Activated B cell treated with CpG ODN at 0.5 μM for 24 hours (primary cell): ENCODE measurements at regions of chr19 and their contacts with region 1.

Region 1: DNA sequence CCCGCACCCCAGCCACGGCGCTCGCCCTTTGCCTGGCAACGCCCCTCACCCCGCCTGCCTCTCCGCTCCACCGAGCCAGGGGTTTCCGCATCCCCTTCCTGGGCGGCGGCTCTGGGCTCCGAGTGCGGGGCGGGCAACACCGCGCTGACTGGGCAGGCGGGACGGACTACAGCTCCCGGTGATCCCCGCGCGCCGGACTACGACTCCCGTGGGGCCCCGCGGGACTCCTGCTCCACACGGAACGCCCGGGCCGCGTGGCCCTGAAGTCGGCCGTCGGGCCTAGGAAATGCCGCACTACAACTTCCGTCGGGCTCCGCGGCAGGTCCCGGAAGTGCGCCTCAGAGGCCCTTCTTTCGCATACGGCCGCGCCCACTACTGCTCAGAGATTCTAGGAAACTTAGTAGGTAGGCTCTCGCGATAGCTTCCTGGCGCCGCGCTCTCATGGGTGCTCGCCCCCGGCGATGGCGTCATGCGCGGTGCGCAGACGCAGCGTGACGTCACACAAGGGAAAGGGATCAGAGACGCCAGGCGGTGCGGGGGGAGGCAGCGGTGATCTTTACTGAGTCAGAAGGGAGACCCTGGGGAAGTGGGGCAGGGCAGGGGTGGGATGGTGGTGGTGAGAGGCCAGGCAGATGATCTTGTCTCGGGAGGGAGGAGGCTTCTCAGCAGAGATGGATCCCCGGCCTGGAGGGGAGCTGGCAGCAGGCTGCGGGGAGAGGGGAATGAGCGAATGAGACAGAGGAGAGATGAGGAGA is at the start of gene JOSD2:
- DNase-seq: peak; percentile 96
- ATAC-seq: peak; percentile 94
- H3K4me3 Mint-ChIP-seq: peak within 1 kb of the TSS; percentile 89
- H3K27ac Mint-ChIP-seq: peak within 1 kb of the TSS; percentile 93
- H3K4me1 Mint-ChIP-seq: peaks cover 13% of the 10 kb centered on the region
- H3K27me3 Mint-ChIP-seq: peaks cover 5% of the 10 kb centered on the region
- CTCF ChIP-seq: no peak
- total RNA-seq, gene JOSD2: 21.0 and 23.7 TPM in 2 replicates

Region 2: DNA sequence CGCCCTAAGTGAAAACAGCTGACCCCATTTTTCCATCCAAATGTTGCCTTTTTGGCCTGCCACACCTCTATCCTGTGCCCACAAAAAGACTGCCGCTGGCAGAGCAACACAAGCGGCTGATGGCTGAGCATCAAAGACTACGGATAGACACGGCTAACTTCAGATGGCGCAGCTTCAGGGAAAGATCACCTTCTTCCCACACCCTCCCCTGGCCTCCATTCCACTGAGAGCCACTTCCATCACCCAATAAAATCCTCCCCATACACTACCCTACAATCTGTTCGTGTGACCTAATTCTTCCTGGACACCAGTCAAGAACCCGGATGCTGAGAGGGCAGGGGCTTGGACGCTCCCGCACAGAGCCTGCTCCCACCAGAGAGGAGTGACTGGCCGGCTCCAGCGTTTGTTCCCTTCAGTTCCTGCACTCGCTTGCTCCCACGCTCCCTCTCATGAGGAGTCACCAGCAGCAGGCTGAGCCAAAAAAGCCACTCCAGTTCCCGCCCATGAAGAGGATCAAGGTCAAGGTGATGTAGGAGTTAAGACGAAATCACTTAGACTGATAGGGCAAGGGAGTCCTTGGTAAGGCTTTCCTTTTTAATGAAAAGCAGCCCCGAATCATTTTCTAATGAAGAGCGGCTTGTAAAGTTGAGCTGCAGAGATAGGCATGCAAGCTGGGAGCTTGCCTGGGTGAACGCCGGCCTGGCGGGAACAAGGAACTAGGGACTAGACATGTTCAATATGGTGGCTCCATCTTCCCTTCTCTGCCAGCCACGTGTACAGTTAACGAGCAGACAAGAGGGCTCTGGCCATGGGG is 783.8 kb before region 1 on chr19:
- CTCF ChIA-PET with region 1: no interaction called
- POLR2A ChIA-PET with region 1: no interaction called
- intact Hi-C with region 1: no loop called
- DNase-seq: no peak
- ATAC-seq: no peak
- H3K4me3 Mint-ChIP-seq: no peak overlapping the region
- H3K27ac Mint-ChIP-seq: no peak overlapping the region
- H3K4me1 Mint-ChIP-seq: no peaks in the 10 kb centered on the region
- H3K27me3 Mint-ChIP-seq: peaks cover 3% of the 10 kb centered on the region
- CTCF ChIP-seq: no peak

Region 3: DNA sequence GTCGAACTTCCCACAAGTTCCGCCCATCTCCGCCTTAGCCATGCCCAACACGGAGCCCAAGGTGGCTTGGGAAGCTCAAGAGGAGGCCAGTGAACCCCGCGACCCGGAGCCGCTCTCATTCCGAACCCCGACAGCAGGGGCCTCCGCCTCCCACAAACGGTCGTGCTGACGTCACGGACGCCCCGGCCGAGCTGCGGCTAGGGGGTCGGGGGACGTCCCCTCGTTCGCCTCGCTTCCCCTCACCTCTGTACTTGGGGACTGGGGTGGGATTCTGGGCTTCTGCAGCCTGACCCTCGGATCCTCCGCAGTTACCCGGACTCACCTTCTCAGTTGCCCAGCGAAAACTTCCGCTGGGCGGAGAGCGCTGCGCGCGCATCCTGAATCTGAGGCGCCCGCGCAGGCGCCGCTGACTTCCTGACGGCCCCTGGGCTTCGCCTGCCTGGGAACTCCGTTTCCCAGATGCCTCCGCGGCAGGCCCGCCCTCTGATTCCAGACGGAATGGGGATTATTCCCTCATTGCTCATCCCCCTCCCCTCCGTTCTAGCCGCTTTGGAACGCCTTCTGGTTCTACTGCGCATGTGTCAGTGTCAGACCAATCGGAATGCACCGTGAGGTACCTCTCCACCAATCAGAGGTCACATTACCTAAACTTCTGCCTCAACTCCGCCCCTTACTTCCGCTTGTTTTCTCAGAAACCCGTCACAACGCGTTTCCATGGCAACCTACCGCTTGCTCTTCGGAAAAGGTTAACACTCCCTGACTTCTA is 486.0 kb before region 1 on chr19 and contains the start of gene VRK3:
- CTCF ChIA-PET with region 1: no interaction called
- POLR2A ChIA-PET with region 1: no interaction called
- intact Hi-C with region 1: loop called (anchors 2 kb)
- DNase-seq: peak; percentile 95
- ATAC-seq: peak; percentile 87
- H3K4me3 Mint-ChIP-seq: peak within 1 kb of the TSS; percentile 97
- H3K27ac Mint-ChIP-seq: peak within 1 kb of the TSS; percentile 100
- H3K4me1 Mint-ChIP-seq: peaks cover 46% of the 10 kb centered on the region
- H3K27me3 Mint-ChIP-seq: no peaks in the 10 kb centered on the region
- CTCF ChIP-seq: no peak
- total RNA-seq, gene VRK3: 71.1 and 82.6 TPM in 2 replicates

Region 4: GRCh38 chr19:50191212-50191611 is 320.0 kb before region 1 on chr19:
- CTCF ChIA-PET with region 1: no interaction called
- POLR2A ChIA-PET with region 1: no interaction called
- intact Hi-C with region 1: no loop called
- DNase-seq: no peak
- ATAC-seq: no peak
- H3K4me3 Mint-ChIP-seq: no peak overlapping the region
- H3K27ac Mint-ChIP-seq: no peak overlapping the region
- H3K4me1 Mint-ChIP-seq: no peaks in the 10 kb centered on the region
- H3K27me3 Mint-ChIP-seq: peaks cover 23% of the 10 kb centered on the region
- CTCF ChIP-seq: no peak

Region 5: DNA sequence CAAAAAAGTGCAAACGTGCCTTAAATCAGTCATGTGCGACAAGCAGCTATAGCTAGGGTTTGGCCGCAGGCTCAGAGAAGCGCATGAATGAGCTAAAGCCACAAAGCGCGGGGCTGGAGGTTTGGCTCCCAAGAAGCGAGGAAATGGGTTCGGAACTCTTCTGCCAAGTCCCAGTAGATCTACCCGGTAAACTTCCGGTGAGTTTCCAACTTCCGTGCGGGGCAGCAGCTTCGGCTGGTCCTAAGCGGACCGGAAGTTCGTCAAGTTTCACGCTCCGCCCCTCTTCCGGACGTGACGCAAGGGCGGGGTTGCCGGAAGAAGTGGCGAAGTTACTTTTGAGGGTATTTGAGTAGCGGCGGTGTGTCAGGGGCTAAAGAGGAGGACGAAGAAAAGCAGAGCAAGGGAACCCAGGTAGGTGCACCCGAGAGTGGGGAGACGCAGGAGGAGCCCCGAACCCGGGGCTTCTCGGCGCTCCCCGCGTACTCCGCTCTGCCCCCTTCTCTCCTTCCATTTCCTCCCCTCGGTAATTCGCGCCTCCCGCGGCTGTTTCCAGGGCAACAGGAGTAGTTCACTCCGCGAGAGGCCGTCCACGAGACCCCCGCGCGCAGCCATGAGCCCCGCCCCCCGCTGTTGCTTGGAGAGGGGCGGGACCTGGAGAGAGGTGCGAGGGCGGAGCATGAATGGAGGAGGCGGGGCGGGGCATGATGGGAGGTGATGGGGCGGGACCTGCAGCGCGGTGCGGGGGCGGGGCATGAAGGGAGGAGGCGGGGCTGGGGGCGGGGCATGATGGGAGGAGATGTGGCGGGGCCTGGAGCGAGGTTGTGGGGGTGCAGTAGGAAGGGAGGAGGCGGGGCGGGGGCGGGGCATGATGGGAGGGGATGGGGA is 134.8 kb before region 1 on chr19 and contains the start of gene NR1H2:
- CTCF ChIA-PET with region 1: no interaction called
- POLR2A ChIA-PET with region 1: interaction called, 12 read pairs
- intact Hi-C with region 1: loop called (anchors 1 kb)
- DNase-seq: peak; percentile 90
- ATAC-seq: peak; percentile 88
- H3K4me3 Mint-ChIP-seq: peak within 1 kb of the TSS; percentile 99
- H3K27ac Mint-ChIP-seq: peak within 1 kb of the TSS; percentile 99
- H3K4me1 Mint-ChIP-seq: peaks cover 14% of the 10 kb centered on the region
- H3K27me3 Mint-ChIP-seq: no peaks in the 10 kb centered on the region
- CTCF ChIP-seq: no peak
- total RNA-seq, gene NR1H2: 66.9 and 79.5 TPM in 2 replicates

Region 6: GRCh38 chr19:50383852-50384684 is 127.2 kb before region 1 on chr19 and contains the start of gene POLD1:
- CTCF ChIA-PET with region 1: no interaction called
- POLR2A ChIA-PET with region 1: interaction called, 5 read pairs
- intact Hi-C with region 1: loop called (anchors 1 kb)
- DNase-seq: peak; percentile 97
- ATAC-seq: peak; percentile 94
- H3K4me3 Mint-ChIP-seq: peak within 1 kb of the TSS; percentile 96
- H3K27ac Mint-ChIP-seq: peak within 1 kb of the TSS; percentile 85
- H3K4me1 Mint-ChIP-seq: peaks cover 28% of the 10 kb centered on the region
- H3K27me3 Mint-ChIP-seq: no peaks in the 10 kb centered on the region
- CTCF ChIP-seq: no peak
- total RNA-seq, gene POLD1: 58.8 and 65.5 TPM in 2 replicates

Region 7: GRCh38 chr19:50476224-50476942 is 34.9 kb before region 1 on chr19 and contains the starts of genes EMC10 and GARIN5A:
- CTCF ChIA-PET with region 1: no interaction called
- POLR2A ChIA-PET with region 1: interaction called, 8 read pairs
- intact Hi-C with region 1: loop called (anchors 1 kb)
- DNase-seq: peak; percentile 95
- ATAC-seq: peak; percentile 95
- H3K4me3 Mint-ChIP-seq: peak within 1 kb of the TSS; percentile 93
- H3K27ac Mint-ChIP-seq: peak within 1 kb of the TSS; percentile 85
- H3K4me1 Mint-ChIP-seq: peaks cover 23% of the 10 kb centered on the region
- H3K27me3 Mint-ChIP-seq: no peaks in the 10 kb centered on the region
- CTCF ChIP-seq: no peak
- total RNA-seq, gene EMC10: 70.8 and 72.1 TPM in 2 replicates
- total RNA-seq, gene GARIN5A: 0.29 and 0.67 TPM in 2 replicates

Region 8: DNA sequence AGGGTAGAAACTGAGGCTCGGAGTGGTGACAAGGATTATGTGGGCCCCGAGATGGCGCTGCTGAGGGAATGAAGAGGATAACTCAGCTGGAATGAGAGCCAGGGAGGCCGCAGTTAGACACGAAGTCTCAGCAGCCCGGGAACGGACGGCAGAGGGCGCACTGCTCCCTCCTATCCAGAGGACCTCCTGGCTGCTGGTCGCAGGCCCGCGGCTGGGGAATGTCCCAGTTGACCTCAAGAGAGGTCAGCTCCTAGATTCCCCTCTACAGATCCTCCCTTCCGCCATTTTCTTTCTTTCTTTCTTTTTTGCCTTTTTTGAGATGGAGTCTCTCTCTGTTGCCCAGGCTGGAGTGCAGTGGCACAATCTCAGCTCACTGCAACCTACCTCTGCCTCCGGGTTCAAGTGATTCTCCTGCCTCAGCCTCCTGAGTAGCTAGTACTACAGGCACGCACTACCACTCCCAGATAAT is 26.6 kb after region 1 on chr19:
- CTCF ChIA-PET with region 1: no interaction called
- POLR2A ChIA-PET with region 1: no interaction called
- intact Hi-C with region 1: no loop called
- DNase-seq: peak; percentile 41
- ATAC-seq: no peak
- H3K4me3 Mint-ChIP-seq: no peak overlapping the region
- H3K27ac Mint-ChIP-seq: no peak overlapping the region
- H3K4me1 Mint-ChIP-seq: no peaks in the 10 kb centered on the region
- H3K27me3 Mint-ChIP-seq: peaks cover 16% of the 10 kb centered on the region
- CTCF ChIP-seq: no peak

Region 9: DNA sequence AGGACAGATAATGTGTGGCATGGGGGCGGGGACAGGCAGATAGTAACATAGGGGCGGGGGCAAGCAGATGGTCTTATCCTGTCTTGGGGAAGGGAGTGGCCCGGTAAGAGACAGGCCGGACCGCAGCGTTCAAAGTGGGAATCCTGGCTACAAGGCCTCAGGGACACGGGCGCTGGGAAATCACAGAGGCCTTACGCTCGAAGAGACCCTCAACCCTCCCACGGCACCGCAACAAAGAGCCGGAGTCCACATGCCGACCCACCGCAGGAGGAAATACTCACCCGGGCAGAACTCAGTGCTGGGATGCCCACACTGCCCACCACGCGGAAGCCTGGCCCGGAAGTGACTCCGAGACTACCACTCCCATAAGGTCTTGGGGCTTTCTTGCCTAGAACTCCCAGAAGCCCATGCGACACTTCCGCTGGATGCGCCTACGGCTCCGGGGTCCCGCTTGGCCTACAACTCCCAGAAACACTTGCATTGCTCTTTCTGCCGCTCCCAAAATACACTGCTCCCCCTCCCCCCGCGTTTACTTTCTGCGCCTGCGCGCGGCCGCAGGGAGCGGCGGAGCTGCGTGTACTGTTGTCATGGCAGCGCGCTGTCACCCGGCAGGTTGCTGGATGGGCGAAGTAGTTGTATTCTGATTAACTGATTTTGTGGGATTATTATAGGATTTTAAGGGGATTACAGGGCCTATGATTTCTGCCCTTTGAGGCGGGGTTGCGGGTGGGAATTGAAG is 597.0 kb after region 1 on chr19 and contains the start of gene CTU1:
- CTCF ChIA-PET with region 1: no interaction called
- POLR2A ChIA-PET with region 1: no interaction called
- intact Hi-C with region 1: loop called (anchors 1 kb)
- DNase-seq: peak; percentile 93
- ATAC-seq: peak; percentile 97
- H3K4me3 Mint-ChIP-seq: peak within 1 kb of the TSS; percentile 93
- H3K27ac Mint-ChIP-seq: peak within 1 kb of the TSS; percentile 96
- H3K4me1 Mint-ChIP-seq: peaks cover 29% of the 10 kb centered on the region
- H3K27me3 Mint-ChIP-seq: peaks cover 2% of the 10 kb centered on the region
- CTCF ChIP-seq: no peak
- total RNA-seq, gene CTU1: 7.8 and 8.9 TPM in 2 replicates